IMR-90 (cell line): ENCODE measurements at regions of chr12 and their contacts with region 1.

Region 1: GRCh38 chr12:30847259-30847658 is 79.3 kb upstream of the TSPAN11 start:
- DNase-seq: peak; percentile 70
- ATAC-seq: no peak
- H3K4me3 ChIP-seq: no peak overlapping the region
- H3K27ac ChIP-seq: no peak overlapping the region
- H3K4me1 ChIP-seq: no peaks in the 10 kb centered on the region
- H3K27me3 ChIP-seq: peaks cover 12% of the 10 kb centered on the region
- CTCF ChIP-seq: peak; percentile 79
- POLR2A ChIP-seq: no peak
- RAD21 ChIP-seq: peak; percentile 77

Region 2: DNA sequence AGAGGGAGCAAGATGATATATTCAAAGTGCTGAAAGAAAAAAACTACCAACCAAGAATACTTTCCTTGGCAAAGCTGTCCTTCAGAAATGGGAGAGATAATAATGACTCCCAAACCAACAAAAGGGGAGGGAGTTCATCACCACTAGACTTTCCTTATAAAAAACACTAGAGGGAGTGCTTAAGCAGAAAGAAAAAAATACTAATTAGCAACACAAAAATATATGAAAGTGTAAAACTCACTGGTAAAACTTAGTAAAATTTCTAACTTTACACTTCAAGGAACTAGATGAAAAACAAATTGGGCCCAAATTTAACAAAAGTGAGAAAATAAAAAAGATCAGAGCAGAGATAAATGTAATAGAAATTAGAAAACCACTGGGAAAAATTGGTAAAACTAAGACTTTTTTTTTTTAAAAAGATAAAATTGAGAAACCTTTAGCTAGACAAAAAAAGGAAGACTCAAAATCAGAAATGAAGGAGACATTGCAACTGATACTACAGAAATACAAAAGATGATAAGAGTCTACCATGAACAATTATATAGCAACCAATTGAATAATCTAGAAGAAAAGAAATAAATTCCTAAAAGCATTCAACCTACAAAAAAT is 1758.5 kb before region 1 on chr12:
- CTCF ChIA-PET with region 1: no interaction called
- POLR2A ChIA-PET with region 1: no interaction called
- dilution Hi-C with region 1: no loop called
- in situ Hi-C with region 1: loop called (anchors 25 kb)
- intact Hi-C with region 1: no loop called
- DNase-seq: peak; percentile 16
- ATAC-seq: no peak
- H3K4me3 ChIP-seq: no peak overlapping the region
- H3K27ac ChIP-seq: no peak overlapping the region
- H3K4me1 ChIP-seq: no peaks in the 10 kb centered on the region
- H3K27me3 ChIP-seq: peaks cover 3% of the 10 kb centered on the region
- CTCF ChIP-seq: peak; percentile 40
- POLR2A ChIP-seq: no peak
- RAD21 ChIP-seq: no peak

Region 3: DNA sequence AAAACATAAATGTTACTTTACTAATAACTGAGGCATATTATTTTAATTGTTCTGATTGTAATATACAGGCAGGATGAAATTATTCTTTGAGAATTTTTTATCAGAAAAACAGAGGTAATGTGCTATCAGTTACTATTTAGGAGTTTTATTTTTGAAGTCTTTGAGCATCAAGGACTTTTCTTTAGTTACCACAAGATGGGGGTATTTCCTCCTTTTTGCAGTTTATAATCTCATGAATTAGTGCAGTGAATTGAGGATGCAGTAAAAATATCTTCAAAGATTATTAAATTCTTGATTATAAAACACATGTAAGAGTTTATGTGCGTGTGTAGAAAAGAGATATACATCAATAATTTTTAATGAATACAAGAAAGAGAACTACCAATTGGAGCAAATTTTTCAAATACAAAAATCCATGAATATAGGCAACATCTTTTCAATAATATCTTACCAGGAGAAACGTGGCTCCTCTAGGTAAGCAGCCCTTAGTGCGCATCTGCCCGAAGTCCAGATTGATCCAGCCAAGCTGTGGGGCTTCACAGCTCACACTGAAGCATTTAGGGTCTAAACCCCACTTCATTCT is 1537.8 kb before region 1 on chr12:
- CTCF ChIA-PET with region 1: interaction called, 3 read pairs
- POLR2A ChIA-PET with region 1: no interaction called
- dilution Hi-C with region 1: no loop called
- in situ Hi-C with region 1: no loop called
- intact Hi-C with region 1: loop called (anchors 10 kb)
- DNase-seq: peak; percentile 47
- ATAC-seq: 0 out of 2 replicates have a peak, but pooled peaks have one; percentile 29
- H3K4me3 ChIP-seq: no peak overlapping the region
- H3K27ac ChIP-seq: no peak overlapping the region
- H3K4me1 ChIP-seq: no peaks in the 10 kb centered on the region
- H3K27me3 ChIP-seq: no peaks in the 10 kb centered on the region
- CTCF ChIP-seq: peak; percentile 67
- POLR2A ChIP-seq: no peak
- RAD21 ChIP-seq: peak; percentile 67

Region 4: DNA sequence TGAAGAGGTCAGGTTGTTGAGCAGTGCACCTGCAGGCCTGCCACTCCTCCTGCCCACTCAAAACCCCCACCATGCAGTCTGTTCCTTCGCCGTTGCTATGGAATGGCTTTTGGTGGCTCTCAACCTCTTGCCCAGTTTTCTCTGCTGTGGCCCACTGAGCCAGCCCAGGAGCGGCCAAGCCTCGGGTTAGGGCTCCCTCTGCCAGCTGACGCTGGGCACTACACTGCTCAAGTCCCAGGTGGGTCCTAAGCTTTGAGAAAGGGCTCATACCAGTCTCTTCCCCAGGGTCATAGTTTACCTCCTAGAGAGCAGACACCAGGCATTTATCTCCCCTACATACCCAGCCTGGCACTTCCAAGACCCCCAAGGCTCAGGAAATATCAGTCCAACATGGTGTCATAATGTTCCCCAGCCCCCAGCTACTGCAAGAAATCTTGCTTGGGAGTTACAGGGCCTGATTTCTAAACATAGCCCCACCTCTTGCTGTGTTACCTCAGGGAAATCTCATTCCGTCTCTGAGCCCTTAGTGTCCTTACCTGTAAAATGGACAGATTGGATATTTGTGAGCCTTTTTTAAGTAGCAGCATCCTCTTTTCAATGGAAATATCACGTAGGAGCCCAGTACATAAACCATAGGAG is 138.7 kb after region 1 on chr12:
- CTCF ChIA-PET with region 1: interaction called, 12 read pairs
- POLR2A ChIA-PET with region 1: no interaction called
- dilution Hi-C with region 1: no loop called
- in situ Hi-C with region 1: no loop called
- intact Hi-C with region 1: loop called (anchors 1 kb)
- DNase-seq: peak; percentile 40
- ATAC-seq: peak; percentile 98
- H3K4me3 ChIP-seq: no peak overlapping the region
- H3K27ac ChIP-seq: no peak overlapping the region
- H3K4me1 ChIP-seq: no peaks in the 10 kb centered on the region
- H3K27me3 ChIP-seq: peaks cover 4% of the 10 kb centered on the region; the same call in 1 of the 2 replicates
- CTCF ChIP-seq: peak; percentile 67
- POLR2A ChIP-seq: no peak
- RAD21 ChIP-seq: peak; percentile 70

Region 5: DNA sequence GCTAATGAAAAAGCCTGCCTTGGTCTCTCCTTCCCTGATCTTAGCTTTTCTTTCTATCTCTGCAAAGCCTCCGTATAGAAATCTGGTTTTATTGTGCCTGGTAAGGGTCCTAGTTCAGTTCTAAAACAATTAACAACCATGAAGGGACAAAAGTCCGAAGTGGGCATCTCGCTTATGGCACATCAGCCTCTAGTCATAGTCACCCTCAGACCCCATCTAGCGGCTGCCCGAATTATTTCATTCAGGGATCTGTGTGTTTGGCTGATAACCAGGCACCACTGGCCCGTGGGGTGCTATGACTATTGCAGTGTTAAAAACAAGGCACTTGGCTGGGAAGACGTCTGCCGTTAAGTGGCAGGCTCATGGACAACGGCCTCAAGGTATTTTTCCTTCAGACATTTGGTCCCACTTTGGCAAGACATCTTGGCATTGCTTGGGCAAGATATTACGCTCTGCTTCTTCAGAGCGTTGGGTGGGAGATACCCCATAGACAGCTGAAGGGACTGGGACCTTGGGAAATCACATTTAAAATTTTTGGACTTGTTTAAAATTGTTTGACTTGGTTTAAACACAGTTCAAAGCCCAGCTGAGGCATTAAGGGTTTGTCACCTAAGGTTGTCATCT is 391.6 kb after region 1 on chr12:
- CTCF ChIA-PET with region 1: interaction called, 6 read pairs
- POLR2A ChIA-PET with region 1: no interaction called
- dilution Hi-C with region 1: no loop called
- in situ Hi-C with region 1: loop called (anchors 5 kb)
- intact Hi-C with region 1: loop called (anchors 1 kb)
- DNase-seq: peak; percentile 50
- ATAC-seq: peak; percentile 91
- H3K4me3 ChIP-seq: peak overlapping the region; percentile 24; the same call in 1 of the 2 replicates
- H3K27ac ChIP-seq: no peak overlapping the region
- H3K4me1 ChIP-seq: no peaks in the 10 kb centered on the region
- H3K27me3 ChIP-seq: peaks cover 44% of the 10 kb centered on the region
- CTCF ChIP-seq: peak; percentile 68
- POLR2A ChIP-seq: no peak
- RAD21 ChIP-seq: peak; percentile 54

Region 6: DNA sequence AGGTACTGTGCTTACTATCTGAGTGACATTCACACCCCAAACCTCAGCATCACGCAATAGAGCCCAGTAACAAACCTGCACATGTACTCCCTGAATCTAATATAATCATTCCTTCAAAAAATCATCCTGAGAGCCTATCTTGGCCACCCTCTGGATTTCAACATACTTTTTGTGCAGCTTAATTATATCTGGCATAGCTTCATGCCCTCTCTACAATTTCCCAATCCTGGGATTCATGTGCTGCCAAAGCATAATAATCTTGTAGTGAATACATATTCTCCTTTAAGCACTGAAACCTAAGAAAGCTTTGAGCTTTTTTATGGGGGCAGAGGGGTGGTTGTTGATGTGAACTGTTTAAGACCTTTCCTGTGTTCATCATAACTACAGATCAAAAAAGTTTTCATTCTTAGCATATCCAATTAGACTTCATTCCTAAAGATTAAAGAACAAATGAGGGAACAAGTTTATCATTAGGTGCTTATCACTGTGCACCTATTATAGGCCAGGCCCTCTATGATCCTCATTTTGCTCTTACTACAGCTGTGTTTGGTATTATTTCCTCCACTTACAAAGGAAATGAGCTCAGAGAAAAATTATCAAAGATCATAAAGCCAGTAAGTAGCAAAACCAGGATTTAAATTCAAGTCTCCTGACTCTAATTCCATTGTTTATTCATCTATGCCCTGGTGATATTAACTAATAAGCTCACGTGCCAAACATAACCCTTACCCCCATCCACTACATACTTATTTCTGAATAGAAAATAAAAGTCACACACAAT is 427.5 kb after region 1 on chr12:
- CTCF ChIA-PET with region 1: interaction called, 7 read pairs
- POLR2A ChIA-PET with region 1: no interaction called
- dilution Hi-C with region 1: no loop called
- in situ Hi-C with region 1: no loop called
- intact Hi-C with region 1: loop called (anchors 10 kb)
- DNase-seq: no peak
- ATAC-seq: no peak
- H3K4me3 ChIP-seq: no peak overlapping the region
- H3K27ac ChIP-seq: no peak overlapping the region
- H3K4me1 ChIP-seq: no peaks in the 10 kb centered on the region
- H3K27me3 ChIP-seq: no peaks in the 10 kb centered on the region
- CTCF ChIP-seq: no peak
- POLR2A ChIP-seq: no peak
- RAD21 ChIP-seq: no peak